ENCODE measurements at regions of chr1 and their contacts with region 1.

Region 1: DNA sequence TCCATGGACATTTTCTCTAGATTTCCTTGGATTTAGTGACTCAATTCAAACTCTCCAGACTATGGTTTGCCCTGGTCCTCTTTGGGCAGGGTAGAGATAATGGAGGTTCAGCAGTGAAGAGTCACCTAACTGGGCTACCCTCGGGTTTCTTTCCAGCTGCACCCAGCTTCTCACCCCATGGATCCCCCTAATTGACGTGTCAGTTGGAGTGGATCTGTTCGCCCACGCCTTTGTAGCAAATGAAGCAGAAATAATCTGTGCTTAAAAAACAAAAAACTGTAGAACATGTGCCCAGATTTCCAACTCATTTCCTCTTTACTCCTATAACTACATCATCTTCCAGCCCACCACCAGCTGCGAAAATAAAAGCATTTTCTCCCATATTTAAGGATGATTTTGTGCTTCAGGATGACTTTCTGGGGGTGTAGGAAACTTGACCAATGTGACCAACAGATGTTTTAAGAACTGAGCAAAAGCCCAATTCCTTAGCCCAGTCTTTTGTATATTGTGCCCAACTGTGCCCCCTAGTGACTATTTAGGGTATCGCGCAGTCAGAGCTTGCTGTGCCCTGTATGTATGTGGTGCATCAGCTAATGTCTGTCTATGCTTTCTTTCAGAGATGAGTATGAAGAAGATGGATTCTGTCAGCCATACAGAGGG is 66.5 kb upstream of the UBE2U start:
- DNase-seq: peak; percentile 93
- ATAC-seq: peak; percentile 51
- H3K4me3 ChIP-seq: no peak overlapping the region
- H3K27ac ChIP-seq: no peak overlapping the region
- H3K4me1 ChIP-seq: peaks cover 42% of the 10 kb centered on the region
- H3K27me3 ChIP-seq: no peaks in the 10 kb centered on the region
- CTCF ChIP-seq: peak; percentile 95

Region 2: DNA sequence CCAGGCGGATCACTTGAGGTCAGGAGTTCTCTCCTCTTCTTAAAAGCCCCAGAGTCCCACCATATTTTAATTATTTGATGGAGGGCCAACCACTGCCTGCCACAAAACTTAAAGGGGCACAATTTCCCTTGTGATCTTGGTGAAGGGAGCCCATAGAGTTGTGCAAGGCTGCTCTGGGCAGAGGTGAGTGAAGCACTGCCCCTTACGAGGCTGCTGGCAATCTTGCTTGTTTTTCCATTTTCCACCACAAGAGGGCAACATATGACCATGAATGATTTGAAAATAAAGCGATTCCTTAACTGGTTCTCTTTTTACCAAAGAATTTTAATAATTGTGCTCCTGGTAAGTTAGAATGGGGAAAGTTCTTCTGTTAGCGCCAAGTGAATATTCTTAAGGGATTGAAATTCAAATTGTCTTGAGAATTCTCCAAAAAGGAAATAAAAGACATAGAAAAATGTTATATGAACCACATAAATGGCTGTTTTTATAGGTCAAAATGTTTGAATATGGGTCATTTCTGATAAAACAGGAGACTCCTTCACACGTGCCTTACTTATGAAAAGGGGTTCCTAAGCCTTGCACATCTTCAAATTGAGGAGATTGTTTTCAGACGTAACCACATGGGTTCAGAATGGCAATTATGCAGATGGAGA is 521.0 kb before region 1 on chr1:
- CTCF ChIA-PET with region 1: no interaction called
- POLR2A ChIA-PET with region 1: no interaction called
- intact Hi-C with region 1: loop called (anchors 2 kb)
- DNase-seq: peak; percentile 94
- ATAC-seq: peak; percentile 76
- H3K4me3 ChIP-seq: no peak overlapping the region
- H3K27ac ChIP-seq: no peak overlapping the region
- H3K4me1 ChIP-seq: peaks cover 7% of the 10 kb centered on the region; the same call in 1 of the 2 replicates
- H3K27me3 ChIP-seq: no peaks in the 10 kb centered on the region
- CTCF ChIP-seq: peak; percentile 88

Region 3: DNA sequence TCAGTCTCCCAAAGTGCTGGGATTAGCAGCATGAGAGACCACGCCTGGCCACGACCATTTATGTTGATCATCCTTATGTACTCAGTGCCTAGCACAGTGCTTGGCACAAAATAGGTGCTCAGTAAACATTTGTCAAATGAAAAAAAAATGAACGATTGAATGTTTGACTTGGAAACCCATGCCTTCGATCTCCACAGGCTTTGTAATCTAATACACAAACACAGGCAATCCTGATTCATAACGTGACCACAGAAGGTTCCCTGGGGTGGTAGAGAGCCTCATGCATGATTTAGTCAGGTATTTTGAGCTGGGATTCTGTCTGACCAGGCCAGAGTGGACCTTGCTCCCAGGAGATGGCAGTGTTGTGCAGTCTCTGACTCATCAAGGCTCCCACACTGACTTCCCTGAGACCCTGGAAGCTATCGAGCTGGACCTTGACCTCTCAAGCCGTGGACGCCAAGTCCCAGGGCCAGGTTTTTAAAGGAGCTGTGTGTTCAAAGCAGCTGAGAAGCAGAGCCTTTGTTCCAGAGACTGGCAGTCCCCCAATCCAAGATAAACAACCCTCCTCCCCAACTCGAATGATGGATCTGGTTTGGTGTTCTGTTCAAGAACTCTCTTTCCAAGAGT is 462.5 kb before region 1 on chr1:
- CTCF ChIA-PET with region 1: interaction called, 6 read pairs
- POLR2A ChIA-PET with region 1: no interaction called
- intact Hi-C with region 1: loop called (anchors 1 kb)
- DNase-seq: peak; percentile 96
- ATAC-seq: peak; percentile 98
- H3K4me3 ChIP-seq: no peak overlapping the region
- H3K27ac ChIP-seq: peak overlapping the region; percentile 60
- H3K4me1 ChIP-seq: peaks cover 14% of the 10 kb centered on the region
- H3K27me3 ChIP-seq: no peaks in the 10 kb centered on the region
- CTCF ChIP-seq: peak; percentile 89

Region 4: DNA sequence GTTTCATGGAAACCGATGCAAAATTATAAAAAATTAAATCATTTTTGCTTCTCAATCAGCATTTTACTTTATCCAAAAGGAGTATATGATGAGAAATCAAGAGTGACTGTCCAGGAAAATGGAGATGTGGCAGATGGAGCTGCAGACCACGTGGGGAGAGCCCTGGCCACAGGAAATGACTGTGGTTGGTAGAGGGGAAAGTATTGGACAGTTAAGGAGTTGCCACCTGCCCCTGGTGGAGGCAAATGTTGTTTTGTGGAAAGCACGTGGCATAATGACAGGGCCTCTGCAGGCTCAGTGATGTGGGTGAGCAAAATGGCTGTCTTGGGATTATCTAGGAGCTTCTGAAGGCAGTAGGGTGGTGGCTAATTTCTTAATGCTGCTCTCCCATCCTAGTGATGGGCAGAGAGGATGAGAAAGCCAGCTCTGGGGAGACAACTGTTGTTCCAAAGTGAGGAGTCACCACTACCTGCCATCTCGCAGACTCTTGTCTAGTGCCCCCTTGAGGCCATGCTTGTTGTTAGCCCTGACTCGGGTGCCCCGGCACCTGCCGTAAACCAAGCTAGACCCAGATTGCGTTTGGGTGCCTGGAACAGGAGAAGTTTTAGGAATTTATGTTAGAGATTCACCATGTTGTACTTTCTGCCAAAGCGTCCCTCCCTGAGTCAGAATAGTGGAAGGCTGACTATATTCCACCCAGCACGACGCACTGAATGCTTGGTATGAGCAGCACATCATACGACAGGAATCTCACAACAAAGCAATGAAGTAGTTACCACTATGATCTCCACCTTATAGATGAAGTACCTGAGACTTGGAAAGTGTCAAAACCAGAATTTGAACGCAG is 219.1 kb before region 1 on chr1:
- CTCF ChIA-PET with region 1: interaction called, 6 read pairs
- POLR2A ChIA-PET with region 1: no interaction called
- intact Hi-C with region 1: loop called (anchors 5 kb)
- DNase-seq: peak; percentile 29
- ATAC-seq: no peak
- H3K4me3 ChIP-seq: no peak overlapping the region
- H3K27ac ChIP-seq: no peak overlapping the region
- H3K4me1 ChIP-seq: peaks cover 25% of the 10 kb centered on the region
- H3K27me3 ChIP-seq: no peaks in the 10 kb centered on the region
- CTCF ChIP-seq: peak; percentile 53

Region 5: DNA sequence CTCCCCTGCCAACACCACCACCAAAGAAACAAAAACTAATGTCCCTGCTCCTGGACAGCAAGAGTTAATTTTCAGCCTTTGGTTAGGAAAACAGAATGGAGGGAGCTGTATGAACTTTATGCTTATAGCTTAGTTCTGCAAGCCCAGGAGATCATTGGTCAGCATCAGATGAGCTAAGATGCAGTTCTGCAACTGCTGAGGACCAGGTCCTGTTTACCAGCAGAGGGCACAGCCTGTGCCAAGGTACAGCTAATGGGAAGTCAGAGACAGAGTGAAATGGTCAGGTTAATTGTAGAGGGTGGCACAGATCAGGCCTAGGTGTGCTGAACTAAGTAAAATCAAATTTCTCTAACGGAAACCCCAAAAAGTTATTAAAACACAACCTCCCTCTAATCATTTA is 201.7 kb before region 1 on chr1:
- CTCF ChIA-PET with region 1: interaction called, 12 read pairs
- POLR2A ChIA-PET with region 1: no interaction called
- intact Hi-C with region 1: loop called (anchors 1 kb)
- DNase-seq: peak; percentile 63
- ATAC-seq: peak; percentile 84
- H3K4me3 ChIP-seq: no peak overlapping the region
- H3K27ac ChIP-seq: no peak overlapping the region
- H3K4me1 ChIP-seq: no peaks in the 10 kb centered on the region
- H3K27me3 ChIP-seq: no peaks in the 10 kb centered on the region
- CTCF ChIP-seq: peak; percentile 75

Region 6: DNA sequence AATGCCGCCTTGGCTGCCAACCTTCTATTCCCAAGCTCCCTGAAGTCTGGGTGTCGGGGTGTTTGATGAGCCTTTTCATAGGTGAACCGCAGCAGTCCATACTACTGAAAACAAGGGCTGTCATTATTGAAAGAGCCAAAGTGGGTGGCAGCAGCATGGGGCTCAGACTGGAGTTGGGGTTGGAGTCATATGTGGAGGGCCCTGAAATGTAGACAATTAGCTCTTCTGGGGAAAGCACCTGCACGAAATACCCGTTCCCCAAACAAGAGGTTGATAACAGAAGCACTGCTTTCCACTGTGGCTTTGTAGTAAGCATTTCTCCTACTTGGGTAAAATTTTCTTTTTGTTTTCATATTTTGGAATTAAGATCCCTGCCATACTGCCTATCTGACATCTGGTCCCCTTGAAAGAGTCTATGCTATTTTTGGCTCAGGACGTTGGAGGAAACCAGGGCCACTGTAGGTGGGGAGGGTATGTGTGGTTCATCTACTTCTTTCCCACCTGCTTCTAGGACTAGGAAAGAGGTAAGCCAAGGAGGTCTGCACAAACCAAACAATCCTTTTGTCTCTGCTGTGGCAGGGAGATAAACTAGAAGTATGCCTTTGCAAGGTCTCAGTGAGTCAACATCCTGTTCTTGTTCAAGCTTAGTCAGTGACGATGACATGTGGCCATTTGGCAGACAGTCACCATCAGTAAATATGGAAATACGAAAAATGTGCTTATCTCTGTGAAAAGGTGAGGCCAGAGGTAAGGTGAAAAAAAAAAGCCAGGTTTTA is 130.4 kb before region 1 on chr1:
- CTCF ChIA-PET with region 1: no interaction called
- POLR2A ChIA-PET with region 1: no interaction called
- intact Hi-C with region 1: loop called (anchors 2 kb)
- DNase-seq: peak; percentile 96
- ATAC-seq: peak; percentile 96
- H3K4me3 ChIP-seq: no peak overlapping the region; the same call in 1 of the 2 replicates
- H3K27ac ChIP-seq: peak overlapping the region; percentile 87
- H3K4me1 ChIP-seq: peaks cover 39% of the 10 kb centered on the region
- H3K27me3 ChIP-seq: no peaks in the 10 kb centered on the region
- CTCF ChIP-seq: no peak

Region 7: DNA sequence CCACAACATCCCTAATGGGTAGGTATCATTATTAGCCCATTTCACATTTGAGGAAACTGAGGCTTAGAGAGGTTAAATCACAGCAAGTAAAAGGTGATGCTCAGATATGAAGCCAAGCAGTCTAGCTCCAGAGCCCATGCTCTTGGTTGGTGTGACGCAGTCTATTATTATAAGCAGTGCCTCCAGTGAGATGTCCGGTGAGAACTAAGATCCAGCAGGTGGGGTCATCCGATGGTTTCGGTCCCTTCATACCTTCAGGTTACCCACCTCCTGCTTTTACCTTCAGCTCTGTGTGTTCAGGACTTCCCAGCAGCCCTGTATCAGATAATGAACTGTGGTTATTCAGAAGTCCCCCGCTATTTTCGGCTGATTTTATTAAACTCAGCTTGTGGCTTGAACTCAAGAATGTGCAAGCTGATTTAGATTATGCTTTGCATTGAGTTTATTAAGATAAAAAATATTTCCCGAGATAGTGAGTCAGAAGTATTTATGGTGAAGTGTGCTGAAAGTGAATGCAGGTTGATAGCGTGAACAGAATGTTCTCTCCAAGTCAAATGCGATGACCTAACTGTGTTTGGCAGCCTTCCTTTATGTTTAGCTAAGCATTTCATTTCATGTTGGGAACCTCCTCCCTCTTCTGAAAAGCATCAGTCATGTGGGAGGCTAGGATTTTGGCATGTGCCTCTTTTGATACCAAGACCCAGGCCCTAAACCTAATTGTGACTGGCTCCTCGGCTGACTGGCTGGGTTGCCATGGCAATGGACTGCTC is 94.4 kb before region 1 on chr1:
- CTCF ChIA-PET with region 1: interaction called, 3 read pairs
- POLR2A ChIA-PET with region 1: no interaction called
- intact Hi-C with region 1: loop called (anchors 5 kb)
- DNase-seq: peak; percentile 96
- ATAC-seq: peak; percentile 55
- H3K4me3 ChIP-seq: peak overlapping the region; percentile 42; the same call in 1 of the 2 replicates
- H3K27ac ChIP-seq: peak overlapping the region; percentile 81
- H3K4me1 ChIP-seq: peaks cover 63% of the 10 kb centered on the region
- H3K27me3 ChIP-seq: no peaks in the 10 kb centered on the region
- CTCF ChIP-seq: peak; percentile 16; the same call in 1 of the 2 replicates